ENCODE measurements at regions of chr2 and their contacts with region 1.

Region 1: DNA sequence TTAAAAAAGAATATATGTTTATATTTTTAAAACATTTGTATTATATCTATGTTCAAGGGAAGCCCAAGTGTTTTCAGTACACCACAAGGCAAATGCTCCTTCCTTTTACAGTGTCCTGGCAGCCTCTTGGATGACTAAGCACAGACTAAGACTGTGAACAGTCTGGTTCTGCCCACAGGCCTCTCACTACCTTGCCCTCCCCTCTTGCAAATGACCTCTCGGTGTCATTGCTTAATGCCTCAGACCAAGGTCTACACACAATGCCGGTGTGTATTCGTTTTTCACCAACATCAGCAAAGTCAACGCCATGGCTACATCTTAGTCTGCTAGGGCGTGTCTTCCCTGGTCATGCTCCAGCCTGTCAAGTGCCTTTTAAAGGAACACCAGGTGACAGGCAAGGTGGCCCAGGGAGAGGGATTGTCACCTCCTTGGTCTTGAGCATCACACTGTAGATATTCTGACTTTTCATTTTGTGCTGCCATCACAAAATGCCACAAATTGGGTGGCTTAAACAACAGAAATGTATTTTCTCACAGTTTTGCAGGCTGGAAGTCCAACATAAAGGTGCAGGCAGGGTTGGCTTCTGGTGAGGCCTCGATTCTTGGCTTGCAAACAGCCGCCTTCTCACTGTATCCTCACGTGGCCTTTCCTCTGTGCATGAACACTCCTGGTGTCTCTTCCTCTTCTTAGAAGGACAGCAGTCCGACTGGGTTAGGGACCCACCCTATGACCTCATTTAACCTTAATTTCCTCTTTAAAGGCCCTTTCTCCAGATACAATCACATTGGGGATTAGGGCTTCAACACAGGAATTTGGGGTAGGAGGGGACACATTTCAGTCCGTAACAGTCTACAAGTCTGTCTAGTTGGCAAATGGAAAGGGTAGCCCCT is 266.5 kb downstream of the KLHL29 start:
- DNase-seq: no peak

Region 2: GRCh38 chr2:23694058-23695045 is 42.9 kb after region 1 on chr2:
- intact Hi-C with region 1: loop called in 1 of 2 experiments (anchors 1 kb)
- DNase-seq: peak; percentile 37